ENCODE measurements at regions of chr2 and their contacts with region 1.

Region 1: DNA sequence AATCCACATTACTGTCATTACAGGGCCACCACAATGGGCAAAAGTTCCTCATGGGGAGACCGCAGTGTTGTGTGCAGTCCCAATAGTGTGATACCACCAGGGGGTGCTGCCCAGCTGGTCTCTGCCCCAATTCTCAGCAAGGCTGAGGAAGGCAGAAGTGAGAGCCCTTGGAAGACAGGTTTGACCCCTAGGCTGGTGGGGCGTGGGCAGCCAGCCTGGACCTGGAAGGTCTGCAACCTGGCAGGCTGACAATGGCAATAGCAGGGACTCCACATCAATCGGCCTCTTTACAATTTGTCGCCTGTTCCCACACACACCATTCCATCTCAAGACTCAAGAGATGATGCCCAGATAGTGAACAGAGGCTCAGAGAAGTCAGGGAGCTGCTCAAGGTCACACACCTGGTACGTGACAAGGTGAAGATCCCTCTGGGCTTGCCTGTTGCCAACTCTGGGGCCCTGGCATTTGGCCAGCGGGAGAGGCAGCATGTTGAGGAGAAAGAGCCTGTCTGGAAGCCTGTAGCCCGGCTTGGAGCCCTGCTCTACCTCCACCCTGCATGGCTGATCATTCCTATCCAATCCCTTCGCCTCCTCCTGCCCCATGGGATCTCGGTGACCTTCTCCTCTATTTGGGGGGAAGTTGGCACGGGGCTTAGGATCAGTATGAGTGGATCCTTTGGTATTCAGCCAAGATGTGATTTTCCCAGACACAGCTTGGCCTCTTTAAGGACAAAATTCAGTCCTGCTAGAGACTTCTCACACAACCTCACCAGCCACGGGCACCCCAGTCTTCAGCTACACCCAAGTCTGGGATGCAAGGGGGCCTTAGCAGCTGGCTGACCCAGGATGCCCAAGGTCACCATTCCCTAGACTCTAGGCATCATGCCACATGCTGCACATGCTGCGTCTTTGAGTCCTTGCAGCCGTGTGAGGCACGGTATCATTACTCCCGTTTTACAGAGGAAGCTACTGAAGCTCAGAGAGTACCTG is 2.9 kb upstream of the ATOH8 start:
- DNase-seq: peak; percentile 55 to 71 (median 61)
- ATAC-seq: peak; percentile 89
- H3K4me3 ChIP-seq: no peak overlapping the region
- H3K27ac ChIP-seq: no peak overlapping the region
- H3K4me1 ChIP-seq: peaks cover 0 to 22% of the 10 kb centered on the region in 2 experiments; a peak in 2 of 5 replicates
- H3K27me3 ChIP-seq: peaks cover 51 to 89% of the 10 kb centered on the region in 2 experiments
- CTCF ChIP-seq: peak; percentile 77 to 84 (median 78)
- EP300 ChIP-seq: no peak
- POLR2A ChIP-seq: no peak
- RAD21 ChIP-seq: peak; percentile 56 to 84

Region 2: GRCh38 chr2:85728883-85729824 is 21.7 kb before region 1 on chr2:
- CTCF ChIA-PET with region 1: interaction called, 3 read pairs
- POLR2A ChIA-PET with region 1: interaction called, 3 read pairs
- in situ Hi-C with region 1: no loop called
- intact Hi-C with region 1: loop called (anchors 1 kb)
- DNase-seq: peak; percentile 84 to 89 (median 86)
- ATAC-seq: peak; percentile 100
- H3K4me3 ChIP-seq: no peak overlapping the region
- H3K27ac ChIP-seq: no peak overlapping the region
- H3K4me1 ChIP-seq: peaks cover 0 to 4% of the 10 kb centered on the region in 2 experiments; a peak in 2 of 5 replicates
- H3K27me3 ChIP-seq: peaks cover 18 to 60% of the 10 kb centered on the region in 2 experiments
- CTCF ChIP-seq: peak; percentile 95 to 96 (median 95)
- EP300 ChIP-seq: no peak
- POLR2A ChIP-seq: no peak
- RAD21 ChIP-seq: peak; percentile 88 to 94

Region 3: DNA sequence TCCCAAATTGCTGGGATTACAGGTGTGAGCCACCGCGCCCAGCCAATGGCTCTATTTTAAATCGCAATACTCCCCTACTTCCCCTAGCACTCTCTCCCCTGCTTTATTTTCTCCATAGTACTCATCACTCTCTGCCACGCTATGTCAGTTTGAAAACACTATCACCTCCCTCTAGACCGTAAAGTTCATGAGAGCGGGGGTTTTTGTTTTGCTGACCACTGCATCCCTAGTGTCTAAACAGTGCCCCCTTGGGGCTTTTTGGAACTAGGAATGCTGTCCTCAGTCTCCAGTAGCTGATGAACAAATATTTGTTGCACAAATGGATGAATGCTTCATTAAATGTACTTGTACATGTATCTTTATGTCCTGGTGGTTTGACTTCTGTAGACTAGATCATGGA is 47.0 kb after region 1 on chr2:
- CTCF ChIA-PET with region 1: interaction called, 6 read pairs
- POLR2A ChIA-PET with region 1: interaction called, 4 read pairs
- in situ Hi-C with region 1: no loop called
- intact Hi-C with region 1: loop called (anchors 5 kb)
- DNase-seq: peak; percentile 38 to 49 (median 41)
- ATAC-seq: peak; percentile 75
- H3K4me3 ChIP-seq: no peak overlapping the region
- H3K27ac ChIP-seq: no peak overlapping the region
- H3K4me1 ChIP-seq: no peaks in the 10 kb centered on the region; a peak in 1 of 5 replicates
- H3K27me3 ChIP-seq: peaks cover 36 to 58% of the 10 kb centered on the region in 2 experiments
- CTCF ChIP-seq: peak; percentile 43 to 57 (median 44); a peak in 5 of 6 replicates
- EP300 ChIP-seq: no peak
- POLR2A ChIP-seq: no peak
- RAD21 ChIP-seq: peak in 1 of 2 experiments; percentile 63; a peak in 2 of 4 replicates

Region 4: GRCh38 chr2:86079981-86080911 is 329.4 kb after region 1 on chr2:
- CTCF ChIA-PET with region 1: interaction called, 10 read pairs
- POLR2A ChIA-PET with region 1: no interaction called
- in situ Hi-C with region 1: no loop called
- intact Hi-C with region 1: loop called (anchors 10 kb)
- DNase-seq: peak; percentile 38 to 75 (median 54)
- ATAC-seq: peak; percentile 99
- H3K4me3 ChIP-seq: no peak overlapping the region
- H3K27ac ChIP-seq: no peak overlapping the region
- H3K4me1 ChIP-seq: no peaks in the 10 kb centered on the region; a peak in 1 of 5 replicates
- H3K27me3 ChIP-seq: no peaks in the 10 kb centered on the region
- CTCF ChIP-seq: peak; percentile 80 to 87 (median 85)
- EP300 ChIP-seq: no peak
- POLR2A ChIP-seq: no peak
- RAD21 ChIP-seq: peak; percentile 85 to 89

Region 5: GRCh38 chr2:86105252-86105968 is 354.5 kb after region 1 on chr2 and contains the start of gene POLR1A:
- CTCF ChIA-PET with region 1: no interaction called
- POLR2A ChIA-PET with region 1: no interaction called
- in situ Hi-C with region 1: no loop called
- intact Hi-C with region 1: no loop called
- DNase-seq: peak; percentile 65 to 92 (median 73)
- ATAC-seq: peak; percentile 95
- H3K4me3 ChIP-seq: peak within 1 kb of the TSS; percentile 72
- H3K27ac ChIP-seq: peak within 1 kb of the TSS; percentile 82
- H3K4me1 ChIP-seq: peaks cover 0 to 17% of the 10 kb centered on the region in 2 experiments; a peak in 2 of 5 replicates
- H3K27me3 ChIP-seq: no peaks in the 10 kb centered on the region
- CTCF ChIP-seq: no peak
- EP300 ChIP-seq: 0 out of 2 replicates have a peak, but pooled peaks have one; percentile 1
- POLR2A ChIP-seq: 0 out of 2 replicates have a peak, but pooled peaks have one; percentile 66
- RAD21 ChIP-seq: no peak
- polyA plus RNA-seq, gene POLR1A: 3.0 to 8.2 TPM

Measured in K562 (cell line).